AG04449 (cell line): ENCODE measurements at regions of chr9 and their contacts with region 1.

Region 1: GRCh38 chr9:32589083-32589723 is 16.2 kb upstream of the NDUFB6 start:
- DNase-seq: no peak
- H3K4me3 ChIP-seq: no peak overlapping the region
- CTCF ChIP-seq: peak; percentile 61

Region 2: DNA sequence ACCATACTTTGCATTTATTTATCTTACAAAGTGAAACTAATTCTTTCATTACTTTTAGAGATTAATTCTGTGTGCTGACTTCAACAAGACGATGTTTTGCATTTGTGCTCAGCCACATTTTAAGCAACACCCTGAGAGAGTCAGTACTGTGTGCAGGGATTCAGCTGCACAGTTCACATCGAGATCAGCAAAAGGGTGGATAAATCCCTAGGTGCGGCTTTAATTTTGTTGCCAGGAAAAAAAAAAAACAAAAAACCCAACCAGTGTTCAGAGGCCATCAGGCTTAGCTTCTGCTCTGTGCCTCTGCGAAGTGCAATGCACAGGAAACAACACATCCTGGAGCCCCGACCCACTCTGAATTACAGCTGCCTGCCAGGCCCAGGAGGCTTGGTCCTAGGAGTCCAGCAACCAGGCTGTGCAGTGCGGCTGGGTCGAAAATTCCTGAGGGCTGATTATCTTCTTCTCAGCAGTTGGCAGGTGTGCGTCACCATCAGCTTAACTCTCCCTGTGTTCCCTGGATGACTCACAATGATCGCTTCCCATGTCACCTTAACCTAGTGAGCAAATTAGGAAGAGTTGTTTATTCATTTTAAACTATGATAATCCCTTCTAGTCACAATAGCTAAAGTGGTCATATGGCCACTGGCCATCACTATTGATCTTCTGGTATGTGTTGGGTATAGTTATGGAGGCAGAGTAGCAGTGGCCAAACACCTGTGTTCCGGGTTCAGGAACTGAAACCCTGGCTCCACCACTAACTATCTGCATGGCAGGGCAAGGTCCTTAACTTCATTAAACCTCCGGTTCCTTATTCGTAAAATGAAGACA is 14.9 kb after region 1 on chr9:
- CTCF ChIA-PET with region 1: interaction called, 14 read pairs
- POLR2A ChIA-PET with region 1: no interaction called
- DNase-seq: no peak
- H3K4me3 ChIP-seq: no peak overlapping the region
- CTCF ChIP-seq: no peak

Region 3: GRCh38 chr9:32703635-32704034 is 114.4 kb after region 1 on chr9:
- CTCF ChIA-PET with region 1: interaction called, 26 read pairs
- POLR2A ChIA-PET with region 1: no interaction called
- DNase-seq: no peak
- H3K4me3 ChIP-seq: no peak overlapping the region
- CTCF ChIP-seq: peak; percentile 46